ENCODE measurements at regions of chrX and their contacts with region 1.

Region 1: DNA sequence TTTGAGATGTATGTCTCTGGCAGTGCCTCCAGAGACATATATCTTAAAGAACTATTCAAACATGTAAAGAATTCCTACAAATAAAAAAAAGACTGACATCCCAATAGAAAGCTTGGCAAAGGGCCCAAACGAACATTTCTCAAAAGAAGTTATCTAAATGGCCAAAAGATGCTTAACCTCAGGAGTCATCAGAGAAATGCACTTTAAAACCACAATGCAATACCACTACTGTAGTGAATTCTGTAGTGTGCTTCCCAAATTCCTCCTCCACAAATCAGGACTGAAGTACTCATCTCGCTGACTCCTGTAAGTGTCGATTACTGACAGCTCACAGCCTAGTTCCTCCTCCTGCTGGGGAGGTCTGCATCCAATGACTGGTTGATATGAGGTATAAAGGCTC is 129.0 kb upstream of the MAMLD1 start:
- DNase-seq: no peak
- H3K4me3 ChIP-seq: no peak overlapping the region
- H3K27ac ChIP-seq: no peak overlapping the region
- H3K4me1 ChIP-seq: no peaks in the 10 kb centered on the region
- H3K27me3 ChIP-seq: no peaks in the 10 kb centered on the region
- CTCF ChIP-seq: no peak

Region 2: GRCh38 chrX:150184487-150184886 is 49.6 kb before region 1 on chrX:
- CTCF ChIA-PET with region 1: no interaction called
- dilution Hi-C with region 1: no loop called
- in situ Hi-C with region 1: no loop called
- intact Hi-C with region 1: no loop called
- DNase-seq: peak; percentile 50
- H3K4me3 ChIP-seq: no peak overlapping the region
- H3K27ac ChIP-seq: no peak overlapping the region
- H3K4me1 ChIP-seq: no peaks in the 10 kb centered on the region
- H3K27me3 ChIP-seq: no peaks in the 10 kb centered on the region
- CTCF ChIP-seq: no peak

Region 3: DNA sequence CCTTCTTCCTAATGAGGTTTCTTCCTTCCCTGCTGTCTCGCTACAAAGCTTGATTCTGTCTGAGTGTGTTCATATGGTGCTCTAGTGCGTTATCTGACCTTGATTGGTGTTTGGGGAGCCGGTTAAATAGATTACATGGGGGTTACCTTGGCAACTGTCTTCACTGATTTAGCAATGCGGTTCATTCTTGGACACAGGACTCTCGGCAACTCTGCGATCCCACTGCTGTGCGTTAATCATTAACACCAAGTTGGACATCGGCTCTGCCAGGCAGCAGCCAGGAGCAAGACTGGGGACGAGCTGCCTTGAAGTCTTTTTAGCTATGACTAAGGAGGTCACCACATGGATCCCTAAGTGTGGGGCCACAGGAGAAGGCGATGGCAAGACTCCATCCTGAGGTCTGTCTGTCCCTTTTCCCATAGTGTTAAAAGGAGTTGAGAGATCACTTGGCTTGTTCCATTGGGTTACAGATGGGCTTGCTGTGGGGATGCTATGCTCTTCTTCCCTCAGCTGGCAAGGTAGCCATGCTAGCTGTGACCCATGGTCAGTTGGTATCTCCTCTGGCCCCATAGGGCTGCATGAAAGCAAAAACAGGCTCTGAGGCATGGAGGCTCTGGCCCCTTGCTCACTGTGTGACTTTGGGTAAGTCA is 35.6 kb after region 1 on chrX:
- CTCF ChIA-PET with region 1: no interaction called
- dilution Hi-C with region 1: loop called (anchors 5 kb)
- in situ Hi-C with region 1: no loop called
- intact Hi-C with region 1: no loop called
- DNase-seq: no peak
- H3K4me3 ChIP-seq: no peak overlapping the region
- H3K27ac ChIP-seq: no peak overlapping the region
- H3K4me1 ChIP-seq: no peaks in the 10 kb centered on the region
- H3K27me3 ChIP-seq: no peaks in the 10 kb centered on the region
- CTCF ChIP-seq: no peak

Region 4: GRCh38 chrX:150291014-150291413 is 56.9 kb after region 1 on chrX:
- CTCF ChIA-PET with region 1: no interaction called
- dilution Hi-C with region 1: loop called (anchors 5 kb)
- in situ Hi-C with region 1: no loop called
- intact Hi-C with region 1: no loop called
- DNase-seq: peak; percentile 48
- H3K4me3 ChIP-seq: no peak overlapping the region
- H3K27ac ChIP-seq: no peak overlapping the region
- H3K4me1 ChIP-seq: no peaks in the 10 kb centered on the region
- H3K27me3 ChIP-seq: no peaks in the 10 kb centered on the region
- CTCF ChIP-seq: no peak